GM12878 (cell line): ENCODE measurements at regions of chr5 and their contacts with region 1.

Region 1: DNA sequence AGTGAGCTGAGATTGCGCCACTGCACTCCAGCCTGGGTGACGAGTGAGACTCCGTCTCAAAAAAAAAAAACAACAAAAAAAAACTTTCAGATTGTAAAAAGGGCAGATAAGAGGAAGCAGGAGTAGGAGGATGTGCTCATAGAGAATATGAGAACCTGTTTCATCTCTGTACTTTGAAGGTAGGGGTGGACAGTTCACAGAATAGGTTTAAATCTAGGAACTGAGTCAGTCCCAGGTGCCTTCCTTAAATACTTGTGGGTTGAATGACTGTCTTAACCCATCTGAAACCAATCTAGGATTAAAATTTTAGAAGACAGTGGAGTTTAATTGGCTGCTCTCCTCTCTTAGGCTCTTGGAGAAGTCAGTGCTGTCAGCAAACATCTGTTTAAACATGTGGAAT is 12.4 kb downstream of the POLK start:
- DNase-seq: peak; percentile 79
- ATAC-seq: peak; percentile 88
- H3K4me3 ChIP-seq: peak overlapping the region; percentile 6; the same call in 1 of the 2 replicates
- H3K27ac ChIP-seq: peak overlapping the region; percentile 59
- H3K4me1 ChIP-seq: peaks cover 34% of the 10 kb centered on the region
- H3K27me3 ChIP-seq: no peaks in the 10 kb centered on the region
- CTCF ChIP-seq: no peak
- EP300 ChIP-seq: no peak
- POLR2A ChIP-seq: no peak
- RAD21 ChIP-seq: 0 out of 2 replicates have a peak, but pooled peaks have one; percentile 0

Region 2: GRCh38 chr5:74464512-74465209 is 1059.4 kb before region 1 on chr5:
- CTCF ChIA-PET with region 1: no interaction called
- POLR2A ChIA-PET with region 1: no interaction called
- RAD21 ChIA-PET with region 1: no interaction called
- SMC1A ChIA-PET with region 1: no interaction called
- in situ Hi-C with region 1: no loop called
- intact Hi-C with region 1: no loop called
- DNase-seq: no peak
- ATAC-seq: peak; percentile 26; the same call in 2 of the 3 replicates
- H3K4me3 ChIP-seq: no peak overlapping the region
- H3K27ac ChIP-seq: peak overlapping the region; percentile 22; the same call in 1 of the 2 replicates
- H3K4me1 ChIP-seq: peaks cover 12% of the 10 kb centered on the region
- H3K27me3 ChIP-seq: no peaks in the 10 kb centered on the region
- CTCF ChIP-seq: no peak
- EP300 ChIP-seq: no peak
- POLR2A ChIP-seq: no peak
- RAD21 ChIP-seq: no peak

Region 3: GRCh38 chr5:75566710-75567309 is 42.7 kb after region 1 on chr5:
- CTCF ChIA-PET with region 1: interaction called, 6 read pairs
- POLR2A ChIA-PET with region 1: interaction called, 7 read pairs
- RAD21 ChIA-PET with region 1: interaction called, 19 read pairs
- SMC1A ChIA-PET with region 1: interaction called, 26 read pairs
- in situ Hi-C with region 1: loop called (anchors 10 kb)
- intact Hi-C with region 1: no loop called
- DNase-seq: peak; percentile 92
- ATAC-seq: peak; percentile 86
- H3K4me3 ChIP-seq: peak overlapping the region; percentile 29; the same call in 1 of the 2 replicates
- H3K27ac ChIP-seq: peak overlapping the region; percentile 96
- H3K4me1 ChIP-seq: peaks cover 36% of the 10 kb centered on the region
- H3K27me3 ChIP-seq: no peaks in the 10 kb centered on the region
- CTCF ChIP-seq: no peak
- EP300 ChIP-seq: peak; percentile 18 to 86; a peak in 2 of 4 replicates
- POLR2A ChIP-seq: no peak
- RAD21 ChIP-seq: peak; percentile 16; the same call in 1 of the 2 replicates

Region 4: GRCh38 chr5:75574791-75575190 is 50.7 kb after region 1 on chr5:
- CTCF ChIA-PET with region 1: interaction called, 4 read pairs
- POLR2A ChIA-PET with region 1: interaction called, 6 read pairs
- RAD21 ChIA-PET with region 1: interaction called, 15 read pairs
- SMC1A ChIA-PET with region 1: interaction called, 76 read pairs
- in situ Hi-C with region 1: loop called (anchors 10 kb)
- intact Hi-C with region 1: no loop called
- DNase-seq: no peak
- ATAC-seq: no peak; the same call in 2 of the 3 replicates
- H3K4me3 ChIP-seq: peak overlapping the region; percentile 40; the same call in 1 of the 2 replicates
- H3K27ac ChIP-seq: peak overlapping the region; percentile 84
- H3K4me1 ChIP-seq: peaks cover 15% of the 10 kb centered on the region
- H3K27me3 ChIP-seq: no peaks in the 10 kb centered on the region
- CTCF ChIP-seq: no peak
- EP300 ChIP-seq: no peak
- POLR2A ChIP-seq: no peak
- RAD21 ChIP-seq: no peak